ENCODE measurements at regions of chr2 and their contacts with region 1.

Region 1: GRCh38 chr2:229273723-229274338 is 2.7 kb upstream of the PID1 start:
- DNase-seq: peak in 1 of 3 donors; percentile 58
- ATAC-seq: peak; percentile 80 to 82
- H3K4me3 ChIP-seq: peak overlapping the region; percentile 43
- H3K27ac ChIP-seq: no peak overlapping the region
- H3K4me1 ChIP-seq: no peaks in the 10 kb centered on the region
- H3K27me3 ChIP-seq: no peaks in the 10 kb centered on the region

Region 2: DNA sequence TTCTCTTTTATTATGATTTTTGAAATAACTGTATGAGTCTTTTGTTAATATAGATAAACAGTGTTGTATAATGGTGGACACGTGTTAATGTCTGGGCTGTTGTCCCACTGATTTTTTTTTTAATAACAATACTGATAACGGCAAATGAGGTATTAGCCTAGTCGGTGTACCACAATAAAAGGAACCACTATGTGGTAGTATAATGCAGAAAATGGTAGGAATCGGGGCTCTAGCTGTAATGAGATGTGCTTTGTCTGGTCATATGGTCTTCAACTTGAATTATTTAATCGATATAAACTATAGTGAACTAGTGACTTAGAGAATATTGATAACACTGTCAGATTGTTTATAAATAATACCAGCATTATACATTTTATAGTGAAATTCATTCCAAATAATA is 574.4 kb before region 1 on chr2:
- intact Hi-C with region 1: loop called in 3 of 4 experiments (anchors 5 to 10 kb)
- DNase-seq: no peak
- ATAC-seq: peak; percentile 39 to 80
- H3K4me3 ChIP-seq: no peak overlapping the region
- H3K27ac ChIP-seq: no peak overlapping the region
- H3K4me1 ChIP-seq: no peaks in the 10 kb centered on the region
- H3K27me3 ChIP-seq: no peaks in the 10 kb centered on the region

Region 3: GRCh38 chr2:229133155-229133772 is 140.6 kb before region 1 on chr2:
- intact Hi-C with region 1: loop called (anchors 5 to 10 kb)
- DNase-seq: no peak
- ATAC-seq: peak; percentile 42 to 75
- H3K4me3 ChIP-seq: no peak overlapping the region
- H3K27ac ChIP-seq: no peak overlapping the region
- H3K4me1 ChIP-seq: no peaks in the 10 kb centered on the region
- H3K27me3 ChIP-seq: no peaks in the 10 kb centered on the region

Measured in right cardiac atrium (tissue), 5 donors.